PC-9 (cell line): ENCODE measurements at regions of chr7 and their contacts with region 1.

Region 1: DNA sequence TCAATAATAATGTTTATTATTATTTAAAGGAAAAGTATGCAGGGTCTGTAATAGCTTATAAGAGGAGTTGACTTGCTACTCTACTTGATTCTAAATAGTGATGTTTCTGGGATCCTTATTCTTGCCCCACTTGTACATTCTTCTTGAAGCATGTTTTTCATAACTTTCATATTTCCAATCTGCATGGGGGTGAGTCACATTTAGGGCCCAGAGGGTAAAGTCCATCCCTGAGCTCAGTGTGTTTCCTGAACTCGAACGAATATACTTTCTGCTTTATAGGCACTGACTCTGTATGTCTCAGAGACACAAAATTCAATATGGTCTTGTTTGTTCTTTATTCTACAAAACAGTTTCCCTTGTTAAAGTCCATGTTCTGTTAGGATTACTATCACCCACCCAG is 61.0 kb upstream of the SMIM30 start:
- DNase-seq: no peak
- H3K4me3 ChIP-seq: no peak overlapping the region
- H3K27ac ChIP-seq: no peak overlapping the region
- H3K4me1 ChIP-seq: no peaks in the 10 kb centered on the region
- H3K27me3 ChIP-seq: no peaks in the 10 kb centered on the region
- CTCF ChIP-seq: no peak

Region 2: GRCh38 chr7:113118074-113118959 is 61.0 kb before region 1 on chr7 and contains the start of gene SMIM30:
- CTCF ChIA-PET with region 1: no interaction called
- POLR2A ChIA-PET with region 1: interaction called, 10 read pairs
- intact Hi-C with region 1: no loop called
- DNase-seq: peak; percentile 70 to 85
- H3K4me3 ChIP-seq: peak within 1 kb of the TSS; percentile 64
- H3K27ac ChIP-seq: no peak within 1 kb of the TSS
- H3K4me1 ChIP-seq: peaks cover 7% of the 10 kb centered on the region
- H3K27me3 ChIP-seq: no peaks in the 10 kb centered on the region
- CTCF ChIP-seq: no peak
- total RNA-seq, gene SMIM30: 32.1 and 46.8 TPM in 2 replicates